GM12878 (cell line): ENCODE measurements at regions of chr1 and their contacts with region 1.

Region 1: GRCh38 chr1:234925440-234926263 is 203.0 kb downstream of the TOMM20 start:
- DNase-seq: peak; percentile 40
- ATAC-seq: peak; percentile 1
- H3K4me3 ChIP-seq: peak overlapping the region; percentile 40; the same call in 1 of the 2 replicates
- H3K27ac ChIP-seq: peak overlapping the region; percentile 95
- H3K4me1 ChIP-seq: peaks cover 48% of the 10 kb centered on the region
- H3K27me3 ChIP-seq: no peaks in the 10 kb centered on the region
- CTCF ChIP-seq: no peak
- EP300 ChIP-seq: no peak; a peak in 1 of 4 replicates
- POLR2A ChIP-seq: no peak
- RAD21 ChIP-seq: no peak

Region 2: DNA sequence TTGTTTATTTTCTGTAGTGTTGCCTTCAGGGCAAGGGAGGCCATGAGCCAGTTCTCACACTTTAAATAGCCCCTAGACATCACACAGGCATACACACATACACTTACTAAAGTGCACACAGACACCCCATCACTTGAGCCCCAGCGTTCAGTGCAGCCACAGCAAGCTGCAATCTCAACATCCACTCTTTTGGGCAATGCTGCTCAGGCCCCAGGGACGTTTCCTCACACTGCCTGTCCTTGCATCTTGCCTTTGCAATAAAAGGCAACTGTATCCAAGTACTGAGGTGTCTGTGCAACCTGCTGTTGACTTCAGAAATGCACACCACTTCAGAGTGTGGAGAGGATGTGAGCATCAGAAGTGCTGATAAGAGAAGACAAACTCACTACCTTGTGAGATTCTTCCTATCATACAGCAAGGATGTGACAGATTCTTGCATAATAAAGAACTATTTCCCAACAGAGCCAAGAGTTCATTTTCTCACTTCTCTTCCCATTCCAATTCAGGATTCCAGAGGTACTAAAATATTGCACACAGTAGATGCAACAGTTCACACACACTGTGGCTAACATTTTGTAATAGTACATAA is 351.8 kb before region 1 on chr1:
- CTCF ChIA-PET with region 1: no interaction called
- POLR2A ChIA-PET with region 1: no interaction called
- RAD21 ChIA-PET with region 1: no interaction called
- SMC1A ChIA-PET with region 1: no interaction called
- in situ Hi-C with region 1: no loop called
- intact Hi-C with region 1: no loop called
- DNase-seq: no peak
- ATAC-seq: no peak; the same call in 2 of the 3 replicates
- H3K4me3 ChIP-seq: no peak overlapping the region
- H3K27ac ChIP-seq: no peak overlapping the region
- H3K4me1 ChIP-seq: no peaks in the 10 kb centered on the region; the same call in 1 of the 2 replicates
- H3K27me3 ChIP-seq: no peaks in the 10 kb centered on the region
- CTCF ChIP-seq: no peak
- EP300 ChIP-seq: no peak
- POLR2A ChIP-seq: no peak
- RAD21 ChIP-seq: no peak

Region 3: GRCh38 chr1:234722904-234723720 is 202.5 kb before region 1 on chr1:
- CTCF ChIA-PET with region 1: interaction called, 3 read pairs
- POLR2A ChIA-PET with region 1: no interaction called
- RAD21 ChIA-PET with region 1: interaction called, 4 read pairs
- SMC1A ChIA-PET with region 1: interaction called, 10 read pairs
- in situ Hi-C with region 1: no loop called
- intact Hi-C with region 1: no loop called
- DNase-seq: no peak
- ATAC-seq: no peak
- H3K4me3 ChIP-seq: no peak overlapping the region
- H3K27ac ChIP-seq: peak overlapping the region; percentile 94
- H3K4me1 ChIP-seq: peaks cover 49% of the 10 kb centered on the region
- H3K27me3 ChIP-seq: no peaks in the 10 kb centered on the region
- CTCF ChIP-seq: no peak
- EP300 ChIP-seq: no peak
- POLR2A ChIP-seq: no peak
- RAD21 ChIP-seq: no peak

Region 4: GRCh38 chr1:234856845-234857245 is 68.8 kb before region 1 on chr1:
- CTCF ChIA-PET with region 1: no interaction called
- POLR2A ChIA-PET with region 1: no interaction called
- RAD21 ChIA-PET with region 1: no interaction called
- SMC1A ChIA-PET with region 1: no interaction called
- in situ Hi-C with region 1: no loop called
- intact Hi-C with region 1: no loop called
- DNase-seq: no peak
- ATAC-seq: no peak
- H3K4me3 ChIP-seq: no peak overlapping the region
- H3K27ac ChIP-seq: no peak overlapping the region
- H3K4me1 ChIP-seq: peaks cover 9% of the 10 kb centered on the region
- H3K27me3 ChIP-seq: no peaks in the 10 kb centered on the region
- CTCF ChIP-seq: no peak
- EP300 ChIP-seq: no peak
- POLR2A ChIP-seq: no peak
- RAD21 ChIP-seq: no peak

Region 5: GRCh38 chr1:234881893-234882771 is 43.5 kb before region 1 on chr1:
- CTCF ChIA-PET with region 1: interaction called, 4 read pairs
- POLR2A ChIA-PET with region 1: interaction called, 3 read pairs
- RAD21 ChIA-PET with region 1: interaction called, 14 read pairs
- SMC1A ChIA-PET with region 1: interaction called, 37 read pairs
- in situ Hi-C with region 1: no loop called
- intact Hi-C with region 1: loop called (anchors 1 kb)
- DNase-seq: peak; percentile 83
- ATAC-seq: peak; percentile 88
- H3K4me3 ChIP-seq: peak overlapping the region; percentile 53
- H3K27ac ChIP-seq: peak overlapping the region; percentile 73
- H3K4me1 ChIP-seq: peaks cover 50% of the 10 kb centered on the region
- H3K27me3 ChIP-seq: no peaks in the 10 kb centered on the region
- CTCF ChIP-seq: no peak
- EP300 ChIP-seq: peak; percentile 90 to 94
- POLR2A ChIP-seq: no peak
- RAD21 ChIP-seq: no peak

Region 6: GRCh38 chr1:234944439-234945344 is 19.0 kb after region 1 on chr1:
- CTCF ChIA-PET with region 1: no interaction called
- POLR2A ChIA-PET with region 1: interaction called, 4 read pairs
- RAD21 ChIA-PET with region 1: interaction called, 12 read pairs
- SMC1A ChIA-PET with region 1: interaction called, 13 read pairs
- in situ Hi-C with region 1: no loop called
- intact Hi-C with region 1: no loop called
- DNase-seq: no peak
- ATAC-seq: peak; percentile 75
- H3K4me3 ChIP-seq: no peak overlapping the region
- H3K27ac ChIP-seq: peak overlapping the region; percentile 69
- H3K4me1 ChIP-seq: peaks cover 16% of the 10 kb centered on the region; the same call in 1 of the 2 replicates
- H3K27me3 ChIP-seq: no peaks in the 10 kb centered on the region
- CTCF ChIP-seq: no peak
- EP300 ChIP-seq: no peak; a peak in 1 of 4 replicates
- POLR2A ChIP-seq: no peak
- RAD21 ChIP-seq: no peak

Region 7: DNA sequence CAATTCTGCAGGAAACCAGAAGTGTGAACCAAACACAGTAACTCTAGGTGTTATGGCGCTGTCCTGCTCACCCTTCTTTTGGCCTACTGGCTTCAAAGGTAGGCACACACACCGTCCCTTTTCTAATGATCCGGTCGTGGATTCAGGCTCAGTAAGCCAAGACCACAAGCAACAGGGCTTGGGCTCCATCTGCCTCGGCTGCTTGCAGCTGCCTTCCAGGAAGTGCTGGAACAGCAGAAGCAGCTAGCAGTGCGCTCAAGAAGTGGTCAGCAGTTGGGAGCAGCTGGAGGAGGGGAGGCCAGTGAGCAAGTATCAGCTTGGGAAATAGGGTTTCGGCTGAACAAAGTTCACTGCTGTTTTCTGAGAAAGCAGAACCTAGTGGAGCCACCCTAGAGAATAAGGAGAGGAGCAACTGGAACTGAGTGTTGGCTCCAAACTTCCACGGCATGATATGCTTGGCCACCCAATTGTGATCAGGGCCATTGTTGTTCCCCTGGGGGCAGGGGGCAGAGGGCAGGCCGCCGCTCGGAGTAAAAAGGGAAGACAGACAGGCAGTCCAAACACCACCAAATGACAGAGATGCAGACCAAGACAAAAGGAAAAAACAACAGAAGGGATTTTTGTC is 29.6 kb after region 1 on chr1:
- CTCF ChIA-PET with region 1: interaction called, 6 read pairs
- POLR2A ChIA-PET with region 1: interaction called, 15 read pairs
- RAD21 ChIA-PET with region 1: interaction called, 48 read pairs
- SMC1A ChIA-PET with region 1: interaction called, 38 read pairs
- in situ Hi-C with region 1: no loop called
- intact Hi-C with region 1: loop called (anchors 1 kb)
- DNase-seq: no peak
- ATAC-seq: peak; percentile 63
- H3K4me3 ChIP-seq: no peak overlapping the region; the same call in 1 of the 2 replicates
- H3K27ac ChIP-seq: peak overlapping the region; percentile 93
- H3K4me1 ChIP-seq: peaks cover 48% of the 10 kb centered on the region
- H3K27me3 ChIP-seq: no peaks in the 10 kb centered on the region
- CTCF ChIP-seq: no peak
- EP300 ChIP-seq: peak in 1 of 2 experiments; percentile 33; a peak in 1 of 4 replicates
- POLR2A ChIP-seq: 0 out of 2 replicates have a peak, but pooled peaks have one; percentile 43
- RAD21 ChIP-seq: no peak

Region 8: DNA sequence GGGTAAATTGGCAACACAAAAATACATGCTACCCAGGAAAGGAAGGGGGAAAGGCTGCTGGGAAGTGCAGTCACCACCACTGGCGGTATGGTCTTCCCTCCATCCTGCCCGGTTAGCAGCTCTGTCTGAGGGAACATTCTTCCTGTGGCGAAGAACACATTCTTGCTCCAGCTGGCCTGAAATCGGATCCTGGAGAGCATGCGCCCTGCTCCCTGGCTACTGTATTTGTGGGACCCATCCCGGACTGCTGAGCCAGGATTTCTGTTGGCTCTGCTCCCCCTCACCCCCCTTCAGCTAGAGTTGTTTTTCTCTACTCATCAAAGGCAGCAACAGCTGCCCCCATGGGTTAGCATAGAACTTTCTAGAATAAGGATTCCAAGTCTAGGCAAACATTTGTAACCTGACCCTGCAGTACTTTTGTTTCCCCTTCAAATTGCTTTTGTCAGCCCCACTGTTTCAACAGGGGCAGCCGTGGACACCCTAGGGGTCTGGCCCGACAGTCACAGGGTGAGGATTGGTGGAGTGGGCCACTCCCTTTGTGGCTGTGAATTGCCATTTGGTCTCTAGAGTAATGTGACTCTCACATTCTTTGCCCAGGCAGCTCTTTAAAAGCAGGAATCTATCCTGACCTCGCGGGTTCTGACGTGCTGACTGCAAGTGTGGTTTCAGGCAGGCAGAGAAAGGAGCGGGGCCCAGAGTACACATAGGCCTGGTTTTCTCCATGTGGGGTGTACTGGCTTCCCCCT is 45.3 kb after region 1 on chr1:
- CTCF ChIA-PET with region 1: interaction called, 3 read pairs
- POLR2A ChIA-PET with region 1: interaction called, 7 read pairs
- RAD21 ChIA-PET with region 1: interaction called, 12 read pairs
- SMC1A ChIA-PET with region 1: interaction called, 26 read pairs
- in situ Hi-C with region 1: no loop called
- intact Hi-C with region 1: loop called (anchors 2 kb)
- DNase-seq: no peak
- ATAC-seq: peak; percentile 72
- H3K4me3 ChIP-seq: no peak overlapping the region
- H3K27ac ChIP-seq: peak overlapping the region; percentile 95
- H3K4me1 ChIP-seq: peaks cover 60% of the 10 kb centered on the region
- H3K27me3 ChIP-seq: no peaks in the 10 kb centered on the region
- CTCF ChIP-seq: no peak
- EP300 ChIP-seq: peak in 1 of 2 experiments; percentile 87; a peak in 2 of 4 replicates
- POLR2A ChIP-seq: peak; percentile 31; the same call in 1 of the 2 replicates
- RAD21 ChIP-seq: 0 out of 2 replicates have a peak, but pooled peaks have one; percentile 4

Region 9: DNA sequence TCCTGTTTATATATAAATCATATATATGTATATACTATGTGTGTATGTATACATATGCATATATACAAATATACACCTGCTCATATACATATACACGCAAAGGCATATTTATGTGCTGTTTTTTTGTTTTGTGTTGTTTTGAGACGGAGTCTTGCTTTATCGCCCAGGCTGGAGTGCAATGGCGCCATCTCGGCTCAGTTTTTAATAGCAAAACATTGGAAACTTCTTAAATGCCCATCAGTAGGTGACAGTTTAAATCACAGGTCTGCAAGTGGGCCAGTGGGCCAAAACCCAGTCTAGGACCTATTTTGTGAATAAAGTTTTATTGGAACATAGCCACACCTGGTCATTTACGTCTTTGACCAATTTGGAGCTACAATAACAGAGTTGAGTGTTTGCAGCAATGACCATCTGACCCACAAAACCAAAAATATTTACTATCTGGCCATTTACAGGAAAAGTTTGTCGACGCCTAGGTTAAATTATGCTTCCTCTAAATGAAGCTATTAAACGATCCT is 70.7 kb after region 1 on chr1:
- CTCF ChIA-PET with region 1: no interaction called
- POLR2A ChIA-PET with region 1: no interaction called
- RAD21 ChIA-PET with region 1: no interaction called
- SMC1A ChIA-PET with region 1: no interaction called
- in situ Hi-C with region 1: no loop called
- intact Hi-C with region 1: no loop called
- DNase-seq: no peak
- ATAC-seq: no peak
- H3K4me3 ChIP-seq: no peak overlapping the region
- H3K27ac ChIP-seq: no peak overlapping the region
- H3K4me1 ChIP-seq: no peaks in the 10 kb centered on the region
- H3K27me3 ChIP-seq: no peaks in the 10 kb centered on the region
- CTCF ChIP-seq: no peak
- EP300 ChIP-seq: no peak
- POLR2A ChIP-seq: no peak
- RAD21 ChIP-seq: no peak

Region 10: GRCh38 chr1:235006132-235006943 is 80.7 kb after region 1 on chr1:
- CTCF ChIA-PET with region 1: no interaction called
- POLR2A ChIA-PET with region 1: no interaction called
- RAD21 ChIA-PET with region 1: interaction called, 3 read pairs
- SMC1A ChIA-PET with region 1: interaction called, 12 read pairs
- in situ Hi-C with region 1: no loop called
- intact Hi-C with region 1: loop called (anchors 1 kb)
- DNase-seq: peak; percentile 74
- ATAC-seq: peak; percentile 44
- H3K4me3 ChIP-seq: no peak overlapping the region
- H3K27ac ChIP-seq: peak overlapping the region; percentile 79
- H3K4me1 ChIP-seq: peaks cover 81% of the 10 kb centered on the region
- H3K27me3 ChIP-seq: no peaks in the 10 kb centered on the region
- CTCF ChIP-seq: no peak
- EP300 ChIP-seq: no peak
- POLR2A ChIP-seq: no peak
- RAD21 ChIP-seq: no peak